ENCODE measurements at regions of chr5 and their contacts with region 1.

Region 1: GRCh38 chr5:170100066-170100943 is 5.4 kb upstream of the FOXI1 start:
- DNase-seq: peak; percentile 50 to 80 (median 70)
- ATAC-seq: peak; percentile 56
- H3K4me3 ChIP-seq: no peak overlapping the region
- H3K4me3 Mint-ChIP-seq: no peak overlapping the region
- H3K27ac ChIP-seq: no peak overlapping the region
- H3K27ac Mint-ChIP-seq: no peak overlapping the region
- H3K4me1 ChIP-seq: no peaks in the 10 kb centered on the region
- H3K4me1 Mint-ChIP-seq: peaks cover 2% of the 10 kb centered on the region
- H3K27me3 ChIP-seq: peaks cover 0 to 5% of the 10 kb centered on the region in 2 experiments
- H3K27me3 Mint-ChIP-seq: peaks cover 22% of the 10 kb centered on the region
- CTCF ChIP-seq: peak; percentile 50

Region 2: GRCh38 chr5:170145462-170145861 is 45.2 kb after region 1 on chr5:
- CTCF ChIA-PET with region 1: no interaction called
- POLR2A ChIA-PET with region 1: no interaction called
- intact Hi-C with region 1: no loop called
- DNase-seq: no peak
- ATAC-seq: no peak
- H3K4me3 ChIP-seq: no peak overlapping the region
- H3K4me3 Mint-ChIP-seq: no peak overlapping the region
- H3K27ac ChIP-seq: no peak overlapping the region
- H3K27ac Mint-ChIP-seq: no peak overlapping the region
- H3K4me1 ChIP-seq: no peaks in the 10 kb centered on the region
- H3K4me1 Mint-ChIP-seq: no peaks in the 10 kb centered on the region
- H3K27me3 ChIP-seq: no peaks in the 10 kb centered on the region
- H3K27me3 Mint-ChIP-seq: peaks cover 2% of the 10 kb centered on the region
- CTCF ChIP-seq: no peak

Region 3: DNA sequence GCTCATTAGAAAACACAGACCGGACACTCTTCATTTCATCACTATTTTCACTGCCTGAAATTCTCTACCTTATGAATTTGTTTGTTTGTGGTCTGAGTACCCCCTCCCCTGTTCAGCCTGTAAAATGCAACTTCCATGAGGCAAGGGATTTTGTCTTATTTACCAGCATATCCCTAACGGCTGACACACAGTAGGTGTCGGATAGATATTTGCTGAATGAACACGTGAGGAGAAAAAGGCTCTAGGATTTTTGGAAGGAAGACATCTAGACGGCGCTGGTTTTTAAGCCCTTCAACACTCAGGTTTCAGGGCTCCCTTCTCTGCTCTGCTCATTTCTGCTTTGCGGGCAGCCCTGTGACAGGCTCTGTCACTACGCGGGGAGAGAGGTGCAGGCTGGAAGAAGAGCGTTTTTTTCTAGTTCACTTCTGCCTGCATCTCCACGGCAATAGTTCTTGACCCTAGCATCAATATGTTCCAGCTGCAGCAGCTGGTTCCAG is 247.9 kb after region 1 on chr5:
- CTCF ChIA-PET with region 1: no interaction called
- POLR2A ChIA-PET with region 1: no interaction called
- intact Hi-C with region 1: loop called in 1 of 2 experiments (anchors 2 kb)
- DNase-seq: peak in 1 of 9 experiments; percentile 23
- ATAC-seq: no peak
- H3K4me3 ChIP-seq: no peak overlapping the region
- H3K4me3 Mint-ChIP-seq: no peak overlapping the region
- H3K27ac ChIP-seq: no peak overlapping the region
- H3K27ac Mint-ChIP-seq: no peak overlapping the region
- H3K4me1 ChIP-seq: no peaks in the 10 kb centered on the region
- H3K4me1 Mint-ChIP-seq: peaks cover 1% of the 10 kb centered on the region
- H3K27me3 ChIP-seq: peaks cover 0 to 4% of the 10 kb centered on the region in 2 experiments
- H3K27me3 Mint-ChIP-seq: peaks cover 25% of the 10 kb centered on the region
- CTCF ChIP-seq: peak; percentile 28

Region 4: GRCh38 chr5:170420780-170421412 is 320.6 kb after region 1 on chr5:
- CTCF ChIA-PET with region 1: interaction called, 46 read pairs
- POLR2A ChIA-PET with region 1: no interaction called
- intact Hi-C with region 1: loop called in 1 of 2 experiments (anchors 1 kb)
- DNase-seq: peak; percentile 22 to 75 (median 48)
- ATAC-seq: peak; percentile 58
- H3K4me3 ChIP-seq: no peak overlapping the region
- H3K4me3 Mint-ChIP-seq: no peak overlapping the region
- H3K27ac ChIP-seq: no peak overlapping the region
- H3K27ac Mint-ChIP-seq: no peak overlapping the region
- H3K4me1 ChIP-seq: peaks cover 18% of the 10 kb centered on the region
- H3K4me1 Mint-ChIP-seq: peaks cover 25% of the 10 kb centered on the region
- H3K27me3 ChIP-seq: no peaks in the 10 kb centered on the region
- H3K27me3 Mint-ChIP-seq: no peaks in the 10 kb centered on the region
- CTCF ChIP-seq: peak; percentile 79

Region 5: DNA sequence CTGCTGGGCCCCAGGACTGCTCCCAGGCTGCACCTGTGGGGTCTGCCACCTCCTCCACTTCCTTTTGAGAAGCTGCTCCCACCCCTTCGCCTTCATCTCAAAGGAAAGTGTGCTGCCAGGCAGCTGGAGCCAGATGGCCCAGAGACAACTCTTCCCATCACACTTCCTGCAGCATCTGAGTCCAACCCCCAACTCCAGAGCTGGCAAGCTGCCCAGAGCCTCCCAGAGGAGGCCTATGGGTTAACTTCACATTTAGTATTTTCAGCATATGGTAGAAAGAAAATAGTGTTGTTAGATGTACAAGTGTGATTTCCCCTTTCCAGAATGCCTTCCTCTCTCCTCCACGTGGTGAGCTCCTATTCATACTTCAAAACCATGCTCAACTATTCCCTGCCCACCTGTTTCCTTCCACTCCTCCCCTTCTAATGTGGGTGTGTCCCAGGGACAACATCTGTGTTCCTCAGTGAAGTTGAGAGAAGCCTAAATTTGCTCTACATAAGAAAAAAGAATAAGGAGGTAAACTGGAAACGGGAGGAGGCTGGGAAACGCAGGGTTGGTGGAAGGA is 327.4 kb after region 1 on chr5:
- CTCF ChIA-PET with region 1: interaction called, 46 read pairs
- POLR2A ChIA-PET with region 1: no interaction called
- intact Hi-C with region 1: no loop called
- DNase-seq: no peak
- ATAC-seq: no peak
- H3K4me3 ChIP-seq: no peak overlapping the region
- H3K4me3 Mint-ChIP-seq: no peak overlapping the region
- H3K27ac ChIP-seq: no peak overlapping the region
- H3K27ac Mint-ChIP-seq: no peak overlapping the region
- H3K4me1 ChIP-seq: no peaks in the 10 kb centered on the region
- H3K4me1 Mint-ChIP-seq: no peaks in the 10 kb centered on the region
- H3K27me3 ChIP-seq: no peaks in the 10 kb centered on the region
- H3K27me3 Mint-ChIP-seq: peaks cover 4% of the 10 kb centered on the region
- CTCF ChIP-seq: no peak

Region 6: GRCh38 chr5:170633235-170634081 is 533.2 kb after region 1 on chr5:
- CTCF ChIA-PET with region 1: interaction called, 33 read pairs
- POLR2A ChIA-PET with region 1: no interaction called
- intact Hi-C with region 1: loop called in 1 of 2 experiments (anchors 1 kb)
- DNase-seq: no peak
- ATAC-seq: peak; percentile 40
- H3K4me3 ChIP-seq: peak overlapping the region; percentile 26 to 37
- H3K4me3 Mint-ChIP-seq: peak overlapping the region; percentile 88
- H3K27ac ChIP-seq: no peak overlapping the region
- H3K27ac Mint-ChIP-seq: no peak overlapping the region
- H3K4me1 ChIP-seq: peaks cover 11% of the 10 kb centered on the region
- H3K4me1 Mint-ChIP-seq: peaks cover 20% of the 10 kb centered on the region
- H3K27me3 ChIP-seq: no peaks in the 10 kb centered on the region
- H3K27me3 Mint-ChIP-seq: peaks cover 13% of the 10 kb centered on the region
- CTCF ChIP-seq: peak; percentile 57

Region 7: GRCh38 chr5:171342362-171343111 is 1242.2 kb after region 1 on chr5:
- CTCF ChIA-PET with region 1: no interaction called
- POLR2A ChIA-PET with region 1: no interaction called
- intact Hi-C with region 1: loop called in 1 of 2 experiments (anchors 10 kb)
- DNase-seq: peak in 6 of 9 experiments; percentile 7 to 66 (median 31)
- ATAC-seq: no peak
- H3K4me3 ChIP-seq: no peak overlapping the region
- H3K4me3 Mint-ChIP-seq: no peak overlapping the region
- H3K27ac ChIP-seq: no peak overlapping the region
- H3K27ac Mint-ChIP-seq: no peak overlapping the region
- H3K4me1 ChIP-seq: no peaks in the 10 kb centered on the region
- H3K4me1 Mint-ChIP-seq: no peaks in the 10 kb centered on the region
- H3K27me3 ChIP-seq: peaks cover 0 to 2% of the 10 kb centered on the region in 2 experiments
- H3K27me3 Mint-ChIP-seq: peaks cover 21% of the 10 kb centered on the region
- CTCF ChIP-seq: peak; percentile 43